ENCODE measurements at regions of chr22 and their contacts with region 1.

Region 1: GRCh38 chr22:40183029-40183581 is 5.4 kb downstream of the TNRC6B start:
- DNase-seq: no peak
- H3K4me3 ChIP-seq: peak overlapping the region; percentile 16
- H3K27ac ChIP-seq: peak overlapping the region; percentile 93
- H3K4me1 ChIP-seq: peaks cover 97% of the 10 kb centered on the region
- H3K27me3 ChIP-seq: no peaks in the 10 kb centered on the region
- CTCF ChIP-seq: no peak

Region 2: GRCh38 chr22:40055143-40055883 is 127.8 kb before region 1 on chr22:
- intact Hi-C with region 1: loop called (anchors 10 kb)
- DNase-seq: no peak
- H3K4me3 ChIP-seq: no peak overlapping the region
- H3K27ac ChIP-seq: no peak overlapping the region
- H3K4me1 ChIP-seq: peaks cover 82% of the 10 kb centered on the region
- H3K27me3 ChIP-seq: no peaks in the 10 kb centered on the region
- CTCF ChIP-seq: no peak

Measured in left ventricle myocardium inferior (tissue), 1 donor.